Activated CD8-positive, alpha-beta T cell treated with anti-CD3 and anti-CD28 coated beads for 36 hours (primary cell): ENCODE measurements at regions of chr16 and their contacts with region 1.

Region 1: DNA sequence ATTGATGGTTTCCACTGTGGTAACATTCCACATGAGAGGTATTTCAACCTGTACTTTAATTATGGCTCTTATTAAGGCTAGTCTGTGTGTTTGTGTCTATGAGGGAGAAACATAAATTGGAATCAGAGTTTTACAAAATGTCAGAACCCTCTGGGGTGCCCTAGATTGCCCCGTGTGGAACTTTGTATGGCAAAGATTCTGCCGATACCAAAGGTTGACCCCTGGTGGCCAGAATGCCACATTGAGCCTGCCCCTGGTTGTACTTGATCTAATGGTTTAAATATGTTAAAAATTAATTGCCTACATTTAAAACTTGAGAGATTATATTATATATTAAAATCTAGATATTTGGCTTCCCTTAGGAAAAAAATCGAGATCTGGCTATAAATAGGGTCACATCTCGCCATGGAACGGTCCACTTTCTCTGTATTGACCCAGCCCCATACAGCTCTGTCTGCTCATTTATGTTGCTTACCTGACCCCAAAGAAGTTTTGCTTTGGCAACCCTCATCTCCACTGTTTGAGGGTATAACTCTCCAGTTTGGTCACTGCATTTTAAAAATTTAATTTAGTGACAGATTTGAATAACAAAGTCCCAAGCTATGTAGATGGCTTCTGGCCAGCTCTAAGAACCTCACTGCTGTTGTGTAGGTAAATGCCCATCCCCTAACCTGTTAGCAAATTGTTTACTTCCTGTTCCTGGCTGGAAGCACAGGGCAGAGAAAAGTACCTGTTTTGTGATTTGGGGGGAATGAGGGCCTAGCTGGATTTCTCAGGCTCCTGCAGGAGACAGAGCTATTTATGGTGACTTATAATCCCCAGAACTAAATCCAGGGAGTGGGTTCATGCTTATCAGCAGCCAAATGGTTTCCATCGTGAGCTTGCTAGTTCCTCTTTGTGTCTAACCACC is 95.0 kb downstream of the PLCG2 start:
- DNase-seq: peak; percentile 85
- ATAC-seq: peak; percentile 92
- H3K4me3 Mint-ChIP-seq: no peak overlapping the region
- H3K27ac Mint-ChIP-seq: no peak overlapping the region
- H3K4me1 Mint-ChIP-seq: peaks cover 11% of the 10 kb centered on the region
- H3K27me3 Mint-ChIP-seq: no peaks in the 10 kb centered on the region
- CTCF ChIP-seq: peak; percentile 80

Region 2: GRCh38 chr16:81748476-81749198 is 125.5 kb before region 1 on chr16:
- CTCF ChIA-PET with region 1: interaction called, 12 read pairs
- POLR2A ChIA-PET with region 1: no interaction called
- intact Hi-C with region 1: no loop called
- DNase-seq: peak; percentile 35
- ATAC-seq: peak; percentile 46
- H3K4me3 Mint-ChIP-seq: no peak overlapping the region
- H3K27ac Mint-ChIP-seq: no peak overlapping the region
- H3K4me1 Mint-ChIP-seq: peaks cover 16% of the 10 kb centered on the region
- H3K27me3 Mint-ChIP-seq: no peaks in the 10 kb centered on the region
- CTCF ChIP-seq: no peak

Region 3: GRCh38 chr16:81778861-81779535 is 95.1 kb before region 1 on chr16 and contains the start of gene PLCG2:
- CTCF ChIA-PET with region 1: interaction called, 14 read pairs
- POLR2A ChIA-PET with region 1: interaction called, 3 read pairs
- intact Hi-C with region 1: loop called (anchors 10 kb)
- DNase-seq: peak; percentile 77
- ATAC-seq: peak; percentile 98
- H3K4me3 Mint-ChIP-seq: peak within 1 kb of the TSS; percentile 77
- H3K27ac Mint-ChIP-seq: peak within 1 kb of the TSS; percentile 25
- H3K4me1 Mint-ChIP-seq: peaks cover 10% of the 10 kb centered on the region
- H3K27me3 Mint-ChIP-seq: peaks cover 39% of the 10 kb centered on the region
- CTCF ChIP-seq: no peak
- total RNA-seq, gene PLCG2: 12.7 to 13.7 TPM

Region 4: GRCh38 chr16:81786321-81786720 is 87.8 kb before region 1 on chr16:
- CTCF ChIA-PET with region 1: interaction called, 11 read pairs
- POLR2A ChIA-PET with region 1: no interaction called
- intact Hi-C with region 1: no loop called
- DNase-seq: no peak
- ATAC-seq: no peak
- H3K4me3 Mint-ChIP-seq: no peak overlapping the region
- H3K27ac Mint-ChIP-seq: no peak overlapping the region
- H3K4me1 Mint-ChIP-seq: no peaks in the 10 kb centered on the region
- H3K27me3 Mint-ChIP-seq: peaks cover 9% of the 10 kb centered on the region
- CTCF ChIP-seq: no peak

Region 5: DNA sequence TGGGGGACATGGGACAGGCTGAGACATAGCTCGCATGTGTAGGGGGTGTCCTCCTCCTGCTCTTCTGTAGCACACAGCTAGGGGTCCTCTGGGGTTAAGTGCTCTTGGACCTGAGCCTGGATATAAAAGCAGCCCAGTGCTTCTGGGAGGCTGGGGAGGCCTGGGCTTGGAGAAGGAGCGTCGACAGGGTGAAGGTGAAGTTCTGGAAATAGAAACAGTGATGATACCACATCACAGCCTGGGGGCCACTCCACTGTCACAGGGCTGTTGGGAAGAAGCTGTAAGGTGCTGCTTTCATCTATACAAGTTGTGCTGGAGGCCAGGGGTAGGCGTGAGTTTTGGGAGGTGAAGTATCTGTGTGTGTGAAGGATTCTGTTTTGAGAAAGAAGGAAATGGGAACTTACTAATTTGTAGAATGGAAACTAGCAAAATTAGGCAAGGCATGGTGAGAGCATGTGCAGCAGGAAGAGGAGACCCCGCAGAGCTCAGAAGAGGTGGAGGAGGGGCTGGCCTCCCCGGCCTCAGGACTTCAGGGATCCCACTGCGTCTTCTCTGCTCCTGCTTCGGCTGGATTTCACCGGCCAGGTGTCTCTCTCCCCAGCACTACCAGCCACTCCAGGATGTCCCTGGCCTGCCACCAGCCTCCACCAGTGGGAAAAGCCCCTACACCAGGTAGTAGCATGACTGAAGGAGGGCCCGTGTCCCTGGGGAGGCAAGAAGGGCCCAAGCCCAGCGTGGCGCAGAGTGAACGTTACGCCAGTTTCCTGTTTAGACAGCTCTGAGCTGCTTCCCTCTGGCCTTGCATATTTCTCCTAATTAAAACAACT is 75.6 kb before region 1 on chr16:
- CTCF ChIA-PET with region 1: interaction called, 14 read pairs
- POLR2A ChIA-PET with region 1: no interaction called
- intact Hi-C with region 1: no loop called
- DNase-seq: peak; percentile 74
- ATAC-seq: peak; percentile 74
- H3K4me3 Mint-ChIP-seq: peak overlapping the region; percentile 49
- H3K27ac Mint-ChIP-seq: peak overlapping the region; percentile 95
- H3K4me1 Mint-ChIP-seq: peaks cover 32% of the 10 kb centered on the region
- H3K27me3 Mint-ChIP-seq: no peaks in the 10 kb centered on the region
- CTCF ChIP-seq: no peak

Region 6: GRCh38 chr16:81832801-81833544 is 41.1 kb before region 1 on chr16:
- CTCF ChIA-PET with region 1: interaction called, 11 read pairs
- POLR2A ChIA-PET with region 1: no interaction called
- intact Hi-C with region 1: no loop called
- DNase-seq: no peak
- ATAC-seq: no peak
- H3K4me3 Mint-ChIP-seq: no peak overlapping the region
- H3K27ac Mint-ChIP-seq: no peak overlapping the region
- H3K4me1 Mint-ChIP-seq: peaks cover 26% of the 10 kb centered on the region
- H3K27me3 Mint-ChIP-seq: no peaks in the 10 kb centered on the region
- CTCF ChIP-seq: no peak

Region 7: GRCh38 chr16:81885976-81886586 is 12.0 kb after region 1 on chr16:
- CTCF ChIA-PET with region 1: interaction called, 42 read pairs
- POLR2A ChIA-PET with region 1: no interaction called
- intact Hi-C with region 1: no loop called
- DNase-seq: peak; percentile 22
- ATAC-seq: peak; percentile 81
- H3K4me3 Mint-ChIP-seq: no peak overlapping the region
- H3K27ac Mint-ChIP-seq: no peak overlapping the region
- H3K4me1 Mint-ChIP-seq: no peaks in the 10 kb centered on the region
- H3K27me3 Mint-ChIP-seq: no peaks in the 10 kb centered on the region
- CTCF ChIP-seq: peak; percentile 83